ENCODE measurements at regions of chr1 and their contacts with region 1.

Region 1: DNA sequence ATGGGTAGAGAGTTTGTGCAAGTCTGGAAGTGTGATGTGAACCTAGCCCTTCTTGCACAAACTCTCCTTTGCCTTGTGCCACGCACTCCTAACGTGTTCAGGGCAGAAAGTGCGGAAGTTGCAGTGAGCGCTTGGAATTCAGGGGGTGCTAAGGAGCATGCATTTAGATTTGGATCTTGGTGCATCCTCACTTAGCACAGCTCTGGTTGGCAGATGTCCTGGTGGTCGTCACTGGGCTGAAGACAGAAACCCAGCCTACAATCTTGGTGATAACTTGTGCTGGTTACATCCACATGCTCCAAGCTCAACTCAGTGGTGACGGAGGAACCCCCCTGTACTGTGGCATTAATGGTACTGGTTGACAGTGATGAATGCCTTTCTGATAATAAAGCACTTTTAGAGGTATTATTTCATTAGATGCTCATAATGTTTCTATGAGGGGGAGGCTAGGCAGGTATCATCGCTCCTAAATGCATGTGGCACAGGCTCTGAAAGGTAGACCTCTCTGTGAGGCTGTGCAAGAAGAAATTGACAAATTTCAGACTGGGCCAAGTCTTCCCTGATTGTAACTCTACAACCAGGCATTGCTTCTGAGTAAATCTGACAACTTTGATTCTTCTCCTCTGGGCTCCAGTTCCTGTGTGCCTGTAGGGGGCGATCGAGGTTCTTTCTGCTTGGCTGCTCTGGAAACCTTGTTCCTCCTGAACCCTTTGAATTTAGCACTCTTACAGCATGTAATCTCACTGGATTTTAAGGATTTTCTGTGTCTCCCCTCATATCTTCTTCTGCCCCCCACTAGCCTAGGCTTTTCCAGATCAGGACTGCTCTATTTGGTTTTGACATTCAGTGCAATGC is 40.6 kb downstream of the MAPKAPK2 start:
- DNase-seq: no peak

Region 2: DNA sequence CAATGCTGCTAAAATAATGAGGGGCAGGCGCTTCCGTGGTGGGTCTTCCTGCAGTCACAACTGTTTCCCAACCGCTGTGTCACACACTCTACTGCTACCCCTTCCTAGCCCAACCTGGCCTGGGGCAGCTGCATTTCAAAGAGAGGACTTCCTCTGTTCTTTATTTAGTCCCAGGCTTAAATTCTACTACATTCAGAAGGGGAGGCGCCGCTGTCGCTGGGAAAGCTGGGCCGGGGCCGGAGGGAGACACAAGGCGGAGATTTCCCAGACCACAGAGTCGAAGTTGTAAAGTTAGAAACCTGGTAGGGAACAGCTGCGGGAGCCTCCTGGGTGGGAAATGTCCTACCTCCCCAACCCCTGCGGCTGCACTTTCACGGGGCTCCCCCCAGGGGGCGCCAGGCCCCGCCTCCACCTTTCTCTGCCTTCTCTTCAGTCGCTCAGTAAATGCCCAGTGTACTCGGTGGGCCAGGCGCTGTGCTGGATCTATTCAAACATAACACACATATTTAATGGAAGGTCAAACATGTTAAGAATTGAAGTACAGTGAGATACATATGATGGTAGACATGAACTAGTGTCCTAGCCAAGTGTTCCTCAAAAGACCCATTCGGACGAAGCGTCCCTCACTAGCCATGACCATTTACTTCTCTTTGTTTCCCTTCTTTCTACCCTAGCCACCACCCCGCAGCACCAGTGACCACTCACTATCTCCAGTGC is 66.9 kb before region 1 on chr1:
- intact Hi-C with region 1: loop called (anchors 1 kb)
- DNase-seq: peak; percentile 85

Region 3: DNA sequence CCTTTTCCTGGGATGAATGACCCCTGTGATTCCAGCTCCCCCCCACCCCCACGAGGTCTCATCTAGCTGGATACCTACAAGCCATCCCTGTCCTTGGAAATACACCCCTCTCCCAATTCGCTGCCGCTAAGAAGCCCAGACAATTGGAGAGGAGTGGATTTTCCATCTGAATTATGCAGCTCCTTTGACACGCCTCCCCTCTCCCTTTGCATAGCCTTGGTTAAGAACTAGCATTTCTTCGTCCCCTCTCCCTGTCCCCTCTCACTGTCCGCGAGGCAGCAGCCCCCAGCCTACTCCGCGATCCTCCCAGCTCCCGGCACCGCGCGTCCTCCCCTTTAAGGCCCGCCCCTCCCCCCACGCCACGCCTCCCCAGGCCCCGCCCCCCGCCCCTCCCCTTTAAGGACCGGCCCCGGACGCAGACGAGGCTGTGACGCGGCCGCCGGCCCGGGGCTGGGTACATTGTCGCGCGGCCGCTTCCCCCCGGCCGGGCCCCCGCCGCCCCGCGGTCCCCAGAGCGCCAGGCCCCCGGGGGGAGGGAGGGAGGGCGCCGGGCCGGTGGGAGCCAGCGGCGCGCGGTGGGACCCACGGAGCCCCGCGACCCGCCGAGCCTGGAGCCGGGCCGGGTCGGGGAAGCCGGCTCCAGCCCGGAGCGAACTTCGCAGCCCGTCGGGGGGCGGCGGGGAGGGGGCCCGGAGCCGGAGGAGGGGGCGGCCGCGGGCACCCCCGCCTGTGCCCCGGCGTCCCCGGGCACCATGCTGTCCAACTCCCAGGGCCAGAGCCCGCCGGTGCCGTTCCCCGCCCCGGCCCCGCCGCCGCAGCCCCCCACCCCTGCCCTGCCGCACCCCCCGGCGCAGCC is 40.6 kb before region 1 on chr1 and contains the start of gene MAPKAPK2:
- intact Hi-C with region 1: loop called (anchors 2 kb)
- DNase-seq: peak; percentile 94
- total RNA-seq, gene MAPKAPK2: 242 TPM

Region 4: DNA sequence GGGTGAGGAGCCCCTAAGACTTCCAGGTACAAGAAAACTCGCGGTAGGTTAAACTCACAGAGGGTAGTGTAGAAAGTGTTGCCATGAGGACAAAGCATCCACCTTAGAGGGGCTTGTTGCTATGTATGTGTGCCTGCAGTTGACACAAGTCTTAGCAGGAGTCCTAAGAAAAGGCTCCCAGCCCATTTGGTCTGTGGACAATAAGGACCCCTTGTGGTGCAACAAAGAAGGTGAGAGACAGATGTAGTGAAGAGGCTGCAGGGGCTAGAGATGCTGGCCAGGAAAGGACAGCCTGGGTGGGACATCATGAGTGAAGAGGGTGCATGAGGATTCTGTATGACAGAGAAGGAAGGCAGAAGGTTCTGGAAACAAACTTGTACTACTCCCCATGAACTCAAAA is 83.3 kb after region 1 on chr1:
- intact Hi-C with region 1: loop called (anchors 5 kb)
- DNase-seq: no peak

Measured in cardiac septum (tissue), 1 donor.